Dorsolateral prefrontal cortex (tissue), 120 donors: ENCODE measurements at regions of chr11 and their contacts with region 1.

Region 1: GRCh38 chr11:60841797-60842667 is at the start of gene CCDC86:
- DNase-seq: peak; percentile 93 to 97 (median 96)
- H3K4me3 ChIP-seq: peak within 1 kb of the TSS; percentile 67 to 99 (median 93)
- H3K27ac ChIP-seq: peak within 1 kb of the TSS in 58 of 59 donors; percentile 6 to 93 (median 86)
- H3K27me3 ChIP-seq: no peaks in the 10 kb centered on the region
- CTCF ChIP-seq: peak in 23 of 56 donors; percentile 6 to 47 (median 25)
- total RNA-seq, gene CCDC86: 10.3 to 21.3 (median 15.6) TPM

Region 2: DNA sequence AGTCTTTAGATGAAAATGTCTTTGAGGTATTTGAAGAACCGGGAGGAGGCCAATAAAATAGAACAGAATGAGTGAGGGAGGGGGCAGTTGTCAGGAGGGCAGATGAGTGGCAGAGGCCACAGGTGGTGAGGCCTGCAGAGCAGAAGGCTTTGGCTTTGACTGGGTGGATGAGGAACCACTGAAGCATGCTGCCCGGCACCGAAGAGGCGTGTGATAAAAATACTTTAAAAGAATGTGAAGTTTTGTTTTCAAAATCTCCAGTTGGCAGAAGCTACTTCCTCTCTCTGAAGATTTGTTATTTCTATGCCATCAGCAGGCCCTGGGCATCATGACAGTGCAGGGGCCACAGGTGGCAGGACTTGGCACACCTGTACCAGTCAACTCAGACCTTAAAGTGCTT is 343.2 kb before region 1 on chr11:
- intact Hi-C with region 1: no loop called
- DNase-seq: peak in 2 of 10 donors; percentile 13 to 14
- H3K4me3 ChIP-seq: no peak overlapping the region
- H3K27ac ChIP-seq: no peak overlapping the region
- H3K27me3 ChIP-seq: no peaks in the 10 kb centered on the region
- CTCF ChIP-seq: no peak

Region 3: DNA sequence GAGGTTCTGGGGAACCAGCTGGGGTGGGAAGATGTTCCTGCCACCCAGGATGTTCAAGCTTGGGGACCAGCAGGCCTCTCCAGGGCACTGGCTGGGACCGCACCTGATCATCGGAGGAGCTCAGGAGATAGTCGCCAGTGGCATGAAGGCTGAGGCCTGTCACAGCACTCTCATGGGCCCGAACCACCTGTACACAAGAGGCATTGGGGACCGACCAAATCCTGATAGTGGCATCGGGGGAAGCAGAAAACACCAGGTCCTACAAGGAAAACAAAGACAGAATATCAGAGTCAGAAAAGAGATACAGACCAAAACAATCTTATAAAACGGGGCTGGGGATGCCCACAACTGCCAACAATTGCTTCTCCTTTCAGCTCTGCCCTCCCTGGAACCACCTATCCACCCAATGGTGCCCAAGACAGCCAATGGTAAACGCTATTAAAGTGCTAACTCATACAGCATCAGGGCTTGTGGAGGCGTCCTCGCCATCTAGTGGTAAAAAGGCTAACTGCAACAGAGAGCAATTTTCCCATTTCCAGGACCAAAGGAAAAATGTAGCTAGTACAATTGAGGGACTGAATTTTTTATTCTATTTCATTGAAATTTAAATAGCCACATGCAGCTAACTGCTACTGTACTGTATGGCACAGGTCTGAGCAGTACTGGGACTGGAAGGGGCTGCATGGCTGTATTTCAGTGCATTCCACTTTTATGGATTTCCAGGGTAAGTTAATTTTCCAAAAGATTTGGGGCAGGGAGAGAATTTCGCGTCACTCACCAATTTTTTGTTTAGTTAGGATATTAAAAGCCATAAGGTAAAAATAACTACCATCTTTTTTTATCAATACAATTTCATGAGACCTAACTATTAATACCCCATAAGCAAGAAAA is 57.3 kb after region 1 on chr11:
- intact Hi-C with region 1: loop called (anchors 2 to 5 kb)
- DNase-seq: peak in 1 of 10 donors; percentile 52
- H3K4me3 ChIP-seq: no peak overlapping the region
- H3K27ac ChIP-seq: peak overlapping the region in 5 of 59 donors; percentile 14 to 44 (median 29)
- H3K27me3 ChIP-seq: no peaks in the 10 kb centered on the region
- CTCF ChIP-seq: peak; percentile 80 to 99 (median 93)

Region 4: GRCh38 chr11:60906132-60906972 is 64.3 kb after region 1 on chr11 and contains the start of gene PRPF19:
- intact Hi-C with region 1: loop called (anchors 2 to 5 kb)
- DNase-seq: peak; percentile 91 to 97 (median 96)
- H3K4me3 ChIP-seq: peak within 1 kb of the TSS; percentile 57 to 100 (median 97)
- H3K27ac ChIP-seq: peak within 1 kb of the TSS; percentile 61 to 98 (median 91)
- H3K27me3 ChIP-seq: no peaks in the 10 kb centered on the region
- CTCF ChIP-seq: peak in 32 of 56 donors; percentile 3 to 60 (median 34)
- total RNA-seq, gene PRPF19: 80.9 to 227 (median 172) TPM